H1 (cell line): ENCODE measurements at regions of chr1 and their contacts with region 1.

Region 1: GRCh38 chr1:27634177-27634984 is 604 bp downstream of the FGR start:
- DNase-seq: peak in 1 of 2 experiments; percentile 67
- H3K4me3 ChIP-seq: peak overlapping the region; percentile 31 to 62 (median 52)
- H3K27ac ChIP-seq: no peak overlapping the region
- H3K4me1 ChIP-seq: peaks cover 0 to 5% (median 2%) of the 10 kb centered on the region in 4 experiments; a peak in 5 of 7 replicates
- H3K27me3 ChIP-seq: peaks cover 19 to 36% (median 31%) of the 10 kb centered on the region in 4 experiments
- CTCF ChIP-seq: no peak
- EP300 ChIP-seq: no peak
- POLR2A ChIP-seq: no peak
- RAD21 ChIP-seq: no peak

Region 2: GRCh38 chr1:27616441-27616840 is 17.9 kb before region 1 on chr1:
- CTCF ChIA-PET with region 1: interaction called, 49 read pairs
- POLR2A ChIA-PET with region 1: interaction called, 3 read pairs
- DNase-seq: no peak
- H3K4me3 ChIP-seq: no peak overlapping the region
- H3K27ac ChIP-seq: no peak overlapping the region
- H3K4me1 ChIP-seq: peaks cover 0 to 17% (median 9%) of the 10 kb centered on the region in 4 experiments; a peak in 6 of 7 replicates
- H3K27me3 ChIP-seq: peaks cover 0 to 11% (median 6%) of the 10 kb centered on the region in 4 experiments; a peak in 2 of 7 replicates
- CTCF ChIP-seq: peak; percentile 55 to 76 (median 63)
- EP300 ChIP-seq: no peak
- POLR2A ChIP-seq: no peak
- RAD21 ChIP-seq: peak; percentile 39 to 57